Activated naive CD4-positive, alpha-beta T cell treated with anti-CD3 and anti-CD28 coated beads for 36 hours (primary cell): ENCODE measurements at regions of chrX and their contacts with region 1.

Region 1: DNA sequence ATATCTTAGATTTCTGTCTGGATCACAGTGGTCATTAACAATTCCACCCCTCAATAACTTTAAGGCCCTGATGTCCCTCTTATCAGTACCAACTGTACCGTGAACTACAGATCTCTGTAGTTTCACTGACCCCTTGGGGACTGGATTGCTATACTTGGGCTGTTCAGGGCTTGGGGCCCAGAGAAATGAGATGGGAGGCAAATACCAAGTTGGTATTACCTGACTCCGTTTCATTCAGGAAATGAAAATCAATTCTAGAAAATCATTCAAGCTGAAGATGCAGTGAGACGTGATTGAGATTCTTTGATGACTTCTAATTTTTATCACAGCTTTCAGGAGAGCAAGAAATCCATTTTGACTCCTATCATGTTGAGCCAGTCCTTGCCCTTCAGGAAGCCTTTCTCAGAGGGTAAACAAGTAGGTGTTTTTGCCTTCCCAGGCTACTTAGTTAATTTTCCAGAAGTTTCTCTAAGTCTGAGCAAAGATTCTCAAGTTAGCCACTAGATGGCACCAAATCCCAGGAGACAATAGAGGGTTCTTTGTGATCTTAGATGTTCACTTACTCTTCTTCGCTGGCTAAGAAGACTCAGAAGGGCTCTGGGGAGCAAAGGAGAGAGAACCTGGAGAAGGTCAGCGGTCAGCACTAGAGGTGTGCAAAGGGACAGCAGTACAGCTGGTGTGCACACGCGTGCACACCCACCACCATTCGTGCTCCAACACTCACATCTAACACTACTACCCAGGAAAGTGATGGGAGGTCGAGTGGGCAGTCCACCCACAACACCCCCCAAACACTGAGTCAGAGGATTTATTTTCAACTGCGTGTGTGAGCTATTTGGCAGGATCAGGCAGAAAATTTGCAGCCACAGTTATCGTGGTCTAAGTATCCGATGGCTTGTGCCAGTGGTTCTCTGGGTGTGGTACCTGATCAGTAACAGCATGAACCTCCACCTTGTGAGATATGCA is 7.4 kb downstream of the HNRNPH2 start:
- DNase-seq: peak; percentile 30
- H3K4me3 Mint-ChIP-seq: no peak overlapping the region
- H3K27ac Mint-ChIP-seq: peak overlapping the region; percentile 88
- H3K4me1 Mint-ChIP-seq: peaks cover 60% of the 10 kb centered on the region
- H3K27me3 Mint-ChIP-seq: no peaks in the 10 kb centered on the region

Region 2: GRCh38 chrX:101097546-101098453 is 317.7 kb before region 1 on chrX and contains the start of gene CENPI:
- CTCF ChIA-PET with region 1: no interaction called
- intact Hi-C with region 1: no loop called
- DNase-seq: peak; percentile 95
- H3K4me3 Mint-ChIP-seq: peak within 1 kb of the TSS; percentile 92
- H3K27ac Mint-ChIP-seq: peak within 1 kb of the TSS; percentile 86
- H3K4me1 Mint-ChIP-seq: peaks cover 22% of the 10 kb centered on the region
- H3K27me3 Mint-ChIP-seq: no peaks in the 10 kb centered on the region
- total RNA-seq, gene CENPI: 19.1 to 20.4 TPM

Region 3: DNA sequence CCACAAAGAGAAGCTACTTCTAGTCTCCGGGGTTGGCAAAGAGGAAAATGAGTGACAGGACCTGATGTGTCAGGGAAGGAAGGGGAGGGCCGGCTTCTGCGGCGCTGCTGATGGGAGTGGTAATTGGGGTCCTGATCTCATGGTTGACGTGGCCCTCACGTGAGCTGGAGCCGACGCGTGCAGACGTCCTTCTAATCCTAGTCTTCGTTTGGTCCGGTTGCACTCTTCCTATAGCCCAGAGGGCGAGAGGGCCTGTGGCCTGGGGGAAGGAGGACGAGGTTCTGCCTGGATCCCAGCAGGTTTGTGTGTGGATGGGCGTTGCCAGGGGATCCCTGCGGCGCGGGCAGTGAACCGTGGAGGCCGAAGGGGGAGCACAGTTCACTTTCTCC is 134.9 kb after region 1 on chrX and contains the start of gene ARMCX1:
- CTCF ChIA-PET with region 1: interaction called, 3 read pairs
- intact Hi-C with region 1: loop called (anchors 2 kb)
- DNase-seq: peak; percentile 61
- H3K4me3 Mint-ChIP-seq: peak within 1 kb of the TSS; percentile 76
- H3K27ac Mint-ChIP-seq: no peak within 1 kb of the TSS
- H3K4me1 Mint-ChIP-seq: peaks cover 9% of the 10 kb centered on the region
- H3K27me3 Mint-ChIP-seq: peaks cover 12% of the 10 kb centered on the region
- total RNA-seq, gene ARMCX1: 2.6 to 3.0 TPM

Region 4: GRCh38 chrX:101617211-101618191 is 202.0 kb after region 1 on chrX and contains the start of gene ARMCX6:
- CTCF ChIA-PET with region 1: interaction called, 3 read pairs
- intact Hi-C with region 1: loop called (anchors 1 kb)
- DNase-seq: peak; percentile 70
- H3K4me3 Mint-ChIP-seq: peak within 1 kb of the TSS; percentile 85
- H3K27ac Mint-ChIP-seq: peak within 1 kb of the TSS; percentile 88
- H3K4me1 Mint-ChIP-seq: peaks cover 38% of the 10 kb centered on the region
- H3K27me3 Mint-ChIP-seq: no peaks in the 10 kb centered on the region
- total RNA-seq, gene ARMCX6: 30.7 to 31.6 TPM

Region 5: DNA sequence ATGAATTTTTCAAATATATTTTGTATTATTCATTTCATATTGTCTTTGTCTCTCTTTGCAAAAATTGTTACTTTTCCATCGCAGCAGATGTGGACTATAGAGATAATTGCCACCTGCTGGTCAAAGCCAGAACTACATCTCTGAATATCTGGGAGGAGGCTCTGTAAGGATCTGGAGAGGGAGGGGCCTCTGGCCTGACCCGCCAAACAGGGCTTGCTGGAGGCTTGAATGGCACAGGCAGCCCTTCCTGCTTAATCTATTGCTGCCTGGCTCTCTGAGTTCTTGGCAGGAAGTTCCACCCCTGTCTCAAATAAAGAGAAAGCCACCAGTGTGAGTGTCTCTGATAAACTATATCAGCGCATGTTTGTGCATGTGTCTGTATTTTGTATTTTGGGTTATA is 383.9 kb after region 1 on chrX:
- CTCF ChIA-PET with region 1: interaction called, 5 read pairs
- intact Hi-C with region 1: loop called (anchors 1 kb)
- DNase-seq: peak; percentile 91
- H3K4me3 Mint-ChIP-seq: peak overlapping the region; percentile 63
- H3K27ac Mint-ChIP-seq: no peak overlapping the region
- H3K4me1 Mint-ChIP-seq: peaks cover 2% of the 10 kb centered on the region
- H3K27me3 Mint-ChIP-seq: no peaks in the 10 kb centered on the region

Region 6: GRCh38 chrX:102085706-102086105 is 670.2 kb after region 1 on chrX:
- CTCF ChIA-PET with region 1: no interaction called
- intact Hi-C with region 1: loop called (anchors 5 kb)
- DNase-seq: peak; percentile 16
- H3K4me3 Mint-ChIP-seq: no peak overlapping the region
- H3K27ac Mint-ChIP-seq: no peak overlapping the region
- H3K4me1 Mint-ChIP-seq: no peaks in the 10 kb centered on the region
- H3K27me3 Mint-ChIP-seq: peaks cover 5% of the 10 kb centered on the region

Region 7: GRCh38 chrX:102659790-102660757 is 1244.6 kb after region 1 on chrX:
- CTCF ChIA-PET with region 1: no interaction called
- intact Hi-C with region 1: loop called (anchors 10 kb)
- DNase-seq: peak; percentile 91
- H3K4me3 Mint-ChIP-seq: peak overlapping the region; percentile 89
- H3K27ac Mint-ChIP-seq: peak overlapping the region; percentile 77
- H3K4me1 Mint-ChIP-seq: peaks cover 18% of the 10 kb centered on the region
- H3K27me3 Mint-ChIP-seq: no peaks in the 10 kb centered on the region